MCF 10A (cell line): ENCODE measurements at regions of chr12 and their contacts with region 1.

Region 1: GRCh38 chr12:90836689-90837088 is 118.3 kb downstream of the CCER1 start:
- DNase-seq: no peak
- H3K4me3 Mint-ChIP-seq: no peak overlapping the region
- H3K27ac Mint-ChIP-seq: no peak overlapping the region
- H3K4me1 Mint-ChIP-seq: no peaks in the 10 kb centered on the region
- H3K27me3 Mint-ChIP-seq: no peaks in the 10 kb centered on the region
- CTCF ChIP-seq: no peak

Region 2: DNA sequence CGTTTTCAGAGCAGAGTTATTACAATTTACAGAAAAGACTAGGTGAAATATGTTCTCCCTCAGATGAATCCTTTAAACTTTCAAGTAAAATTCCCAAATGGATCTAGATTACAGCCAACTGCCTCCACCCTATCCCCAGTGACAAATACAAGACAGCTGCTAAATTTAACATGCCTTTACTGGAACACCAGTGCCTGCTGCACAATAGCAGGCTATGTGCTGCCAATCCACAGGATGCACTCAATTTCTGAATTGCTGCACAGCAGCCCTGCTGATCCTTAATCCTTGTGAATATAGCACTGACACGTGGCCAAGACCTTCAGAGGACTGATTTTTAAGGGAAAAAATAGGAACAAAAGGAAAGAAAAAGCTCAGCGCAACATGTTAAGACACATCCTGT is 10.7 kb before region 1 on chr12:
- CTCF ChIA-PET with region 1: interaction called, 10 read pairs
- POLR2A ChIA-PET with region 1: interaction called, 4 read pairs
- intact Hi-C with region 1: no loop called
- DNase-seq: no peak
- H3K4me3 Mint-ChIP-seq: no peak overlapping the region
- H3K27ac Mint-ChIP-seq: no peak overlapping the region
- H3K4me1 Mint-ChIP-seq: no peaks in the 10 kb centered on the region
- H3K27me3 Mint-ChIP-seq: no peaks in the 10 kb centered on the region
- CTCF ChIP-seq: no peak